Posterior vena cava (tissue), 2 donors: ENCODE measurements at regions of chr2 and their contacts with region 1.

Region 1: GRCh38 chr2:168118733-168119514 is 128.5 kb downstream of the STK39 start:
- DNase-seq: no peak

Region 2: GRCh38 chr2:166539340-166540162 is 1579.4 kb before region 1 on chr2:
- intact Hi-C with region 1: loop called in 1 of 2 experiments (anchors 2 kb)
- DNase-seq: no peak

Region 3: GRCh38 chr2:167964650-167965413 is 154.1 kb before region 1 on chr2:
- intact Hi-C with region 1: loop called in 1 of 2 experiments (anchors 10 kb)
- DNase-seq: no peak